OCI-LY7 (cell line): ENCODE measurements at regions of chr9 and their contacts with region 1.

Region 1: GRCh38 chr9:112793213-112793810 is 42.8 kb downstream of the SNX30 start:
- DNase-seq: peak; percentile 80
- H3K4me3 ChIP-seq: no peak overlapping the region
- H3K27ac ChIP-seq: no peak overlapping the region
- H3K4me1 ChIP-seq: peaks cover 4% of the 10 kb centered on the region
- CTCF ChIP-seq: peak; percentile 94

Region 2: GRCh38 chr9:112097712-112098688 is 695.3 kb before region 1 on chr9:
- CTCF ChIA-PET with region 1: no interaction called
- POLR2A ChIA-PET with region 1: no interaction called
- intact Hi-C with region 1: loop called (anchors 10 kb)
- DNase-seq: peak; percentile 80
- H3K4me3 ChIP-seq: no peak overlapping the region
- H3K27ac ChIP-seq: no peak overlapping the region
- H3K4me1 ChIP-seq: no peaks in the 10 kb centered on the region
- CTCF ChIP-seq: peak; percentile 89

Region 3: DNA sequence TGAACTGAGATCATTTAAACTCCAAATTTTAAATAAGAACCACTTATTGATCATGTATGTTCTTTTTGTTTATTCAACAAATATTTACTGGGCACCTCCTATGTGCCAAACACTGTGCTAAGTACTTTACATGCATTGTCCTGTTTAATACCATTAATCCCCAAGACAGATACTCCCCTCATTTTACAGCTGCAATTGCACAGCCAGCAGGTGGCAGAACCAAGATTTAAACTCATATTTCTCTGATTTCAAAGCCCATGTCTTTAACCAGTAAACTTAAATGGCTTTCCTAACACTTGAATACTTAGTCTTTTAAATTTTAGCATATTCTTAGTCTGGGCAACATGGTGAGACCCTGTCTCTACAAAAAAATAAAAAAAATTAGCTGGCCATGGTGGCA is 350.1 kb before region 1 on chr9:
- CTCF ChIA-PET with region 1: no interaction called
- POLR2A ChIA-PET with region 1: no interaction called
- intact Hi-C with region 1: loop called (anchors 5 kb)
- DNase-seq: peak; percentile 39
- H3K4me3 ChIP-seq: no peak overlapping the region
- H3K27ac ChIP-seq: no peak overlapping the region
- H3K4me1 ChIP-seq: peaks cover 12% of the 10 kb centered on the region
- CTCF ChIP-seq: peak; percentile 79

Region 4: GRCh38 chr9:112570671-112571167 is 222.6 kb before region 1 on chr9:
- CTCF ChIA-PET with region 1: no interaction called
- POLR2A ChIA-PET with region 1: no interaction called
- intact Hi-C with region 1: loop called (anchors 10 kb)
- DNase-seq: no peak
- H3K4me3 ChIP-seq: no peak overlapping the region
- H3K27ac ChIP-seq: no peak overlapping the region
- H3K4me1 ChIP-seq: no peaks in the 10 kb centered on the region
- CTCF ChIP-seq: no peak